A549 (cell line): ENCODE measurements at regions of chr6 and their contacts with region 1.

Region 1: DNA sequence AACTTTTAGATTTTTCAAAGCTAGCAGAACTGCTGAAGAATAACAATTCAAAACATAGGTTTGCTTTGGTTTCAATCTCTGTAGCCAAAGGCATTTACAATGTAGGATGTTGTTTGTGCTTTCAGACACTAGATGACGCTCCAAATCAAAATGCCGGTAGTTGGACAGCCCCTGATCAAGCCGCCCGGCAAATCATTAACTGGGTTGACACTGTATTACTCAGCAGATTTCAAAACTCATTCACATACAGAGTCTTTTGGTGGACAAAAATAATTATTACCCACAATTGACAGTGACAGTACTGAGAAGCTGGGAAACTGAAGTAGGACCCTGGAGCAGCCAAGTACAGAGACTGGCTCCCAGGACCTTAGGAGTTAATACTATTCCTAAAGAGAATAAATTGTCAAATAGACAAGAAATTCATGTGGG is 21.3 kb upstream of the HFE start:
- DNase-seq: peak; percentile 60 to 88
- ATAC-seq: peak; percentile 90 to 92
- H3K4me3 ChIP-seq: peak overlapping the region; percentile 30
- H3K27ac ChIP-seq: peak overlapping the region; percentile 84 to 85
- H3K4me1 ChIP-seq: peaks cover 20% of the 10 kb centered on the region
- CTCF ChIP-seq: peak; percentile 89
- EP300 ChIP-seq: no peak
- POLR2A ChIP-seq: no peak
- RAD21 ChIP-seq: peak; percentile 89 to 92

Region 2: DNA sequence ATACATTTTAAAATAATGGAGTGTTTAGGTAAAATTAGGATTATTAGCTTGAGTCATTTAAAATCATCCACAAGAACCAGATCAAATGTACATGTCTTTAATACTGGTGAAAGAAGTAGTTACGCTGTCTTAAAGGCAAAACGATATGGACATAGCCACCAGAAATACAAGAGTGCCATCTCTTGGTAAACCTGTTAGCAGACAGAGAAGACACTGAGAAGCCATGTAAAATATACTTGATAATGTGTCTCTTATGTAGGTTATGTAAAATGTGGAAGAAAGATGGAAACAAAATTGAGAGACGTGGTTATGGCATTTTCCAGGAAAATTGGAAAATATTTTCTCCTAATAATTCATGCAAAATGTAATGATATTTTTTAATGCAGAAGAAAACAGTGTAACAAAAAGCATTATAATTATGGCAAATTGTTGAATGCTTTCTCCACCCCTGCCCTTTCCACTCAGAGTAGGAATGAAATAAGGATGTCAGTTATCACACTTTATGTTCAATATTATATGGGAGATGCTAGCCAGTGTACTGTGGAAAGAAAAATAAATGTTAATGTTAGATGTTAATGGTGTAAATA is 123.3 kb before region 1 on chr6:
- CTCF ChIA-PET with region 1: no interaction called
- POLR2A ChIA-PET with region 1: no interaction called
- DNase-seq: peak; percentile 16 to 64
- ATAC-seq: peak; percentile 83 to 87; a peak in 4 of 6 replicates
- H3K4me3 ChIP-seq: no peak overlapping the region
- H3K27ac ChIP-seq: no peak overlapping the region
- H3K4me1 ChIP-seq: 0 out of 3 replicates have a peak, but pooled peaks cover 2% of the 10 kb centered on the region
- CTCF ChIP-seq: peak; percentile 74
- EP300 ChIP-seq: no peak
- POLR2A ChIP-seq: no peak
- RAD21 ChIP-seq: peak; percentile 82 to 86

Region 3: GRCh38 chr6:26087284-26088115 is 21.5 kb after region 1 on chr6 and contains the start of gene HFE:
- CTCF ChIA-PET with region 1: interaction called, 580 read pairs
- POLR2A ChIA-PET with region 1: no interaction called
- DNase-seq: peak; percentile 24 to 48
- ATAC-seq: peak; percentile 80 to 83
- H3K4me3 ChIP-seq: peak within 1 kb of the TSS; percentile 67
- H3K27ac ChIP-seq: peak within 1 kb of the TSS; percentile 86 to 91
- H3K4me1 ChIP-seq: peaks cover 17% of the 10 kb centered on the region; the same call in 2 of the 3 replicates
- CTCF ChIP-seq: no peak
- EP300 ChIP-seq: no peak
- POLR2A ChIP-seq: peak; percentile 8; the same call in 1 of the 2 replicates
- RAD21 ChIP-seq: no peak
- polyA plus RNA-seq, gene HFE: 31.7 and 35.9 TPM in 2 replicates